Stomach (tissue), 19 donors: ENCODE measurements at regions of chr9 and their contacts with region 1.

Region 1: GRCh38 chr9:126558051-126558665 is 55.6 kb upstream of the LMX1B start:
- DNase-seq: peak; percentile 80 to 87
- H3K4me3 ChIP-seq: no peak overlapping the region
- H3K27ac ChIP-seq: no peak overlapping the region
- H3K4me1 ChIP-seq: no peaks in the 10 kb centered on the region
- H3K27me3 ChIP-seq: peaks cover 0 to 40% (median 3%) of the 10 kb centered on the region in 3 donors
- CTCF ChIP-seq: peak in 6 of 7 experiments; percentile 87 to 98 (median 94)
- EP300 ChIP-seq: no peak
- POLR2A ChIP-seq: no peak

Region 2: GRCh38 chr9:126500684-126501382 is 57.3 kb before region 1 on chr9:
- intact Hi-C with region 1: loop called (anchors 5 kb)
- DNase-seq: peak; percentile 81 to 94
- H3K4me3 ChIP-seq: no peak overlapping the region
- H3K27ac ChIP-seq: peak overlapping the region in 1 of 5 donors; percentile 64
- H3K4me1 ChIP-seq: peaks cover 25 to 45% (median 41%) of the 10 kb centered on the region in 4 donors
- H3K27me3 ChIP-seq: peaks cover 0 to 12% (median 0%) of the 10 kb centered on the region in 3 donors
- CTCF ChIP-seq: peak in 5 of 7 experiments; percentile 85 to 97 (median 95)
- EP300 ChIP-seq: no peak
- POLR2A ChIP-seq: no peak

Region 3: GRCh38 chr9:126599047-126599650 is 41.0 kb after region 1 on chr9:
- intact Hi-C with region 1: no loop called
- DNase-seq: no peak
- H3K4me3 ChIP-seq: no peak overlapping the region
- H3K27ac ChIP-seq: no peak overlapping the region
- H3K4me1 ChIP-seq: no peaks in the 10 kb centered on the region
- H3K27me3 ChIP-seq: peaks cover 0 to 36% (median 12%) of the 10 kb centered on the region in 3 donors
- CTCF ChIP-seq: no peak
- EP300 ChIP-seq: no peak
- POLR2A ChIP-seq: no peak